ENCODE measurements at regions of chr16 and their contacts with region 1.

Region 1: DNA sequence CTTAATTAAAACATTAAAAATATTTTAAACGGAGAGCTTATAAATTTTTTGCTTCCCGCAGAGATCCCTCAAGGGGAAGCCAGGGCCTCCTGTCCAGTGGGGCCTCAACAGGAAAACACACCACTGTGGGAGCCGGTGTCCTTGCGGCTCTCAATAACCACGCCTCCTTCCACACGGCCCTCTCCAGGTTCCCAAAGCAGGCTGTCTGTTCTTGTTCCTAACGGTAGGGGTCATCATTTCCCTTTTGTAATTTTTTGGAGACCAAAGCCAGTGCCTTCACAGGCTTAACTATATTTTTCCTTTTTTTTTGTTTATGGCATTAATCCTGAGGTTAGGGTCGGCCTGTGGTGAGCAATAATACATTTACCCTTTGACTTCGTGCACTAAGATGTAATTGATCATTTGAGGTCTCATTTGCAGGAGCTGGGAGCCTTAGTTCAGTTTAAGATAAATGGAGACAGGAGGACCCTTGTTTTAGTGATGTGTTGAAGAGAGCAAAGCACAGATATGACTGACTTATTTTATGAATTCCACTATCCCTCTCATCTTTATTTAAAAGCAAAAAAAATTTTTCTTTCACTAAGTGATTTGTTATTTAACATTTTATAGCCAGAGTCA is 77.5 kb upstream of the N4BP1 start:
- DNase-seq: peak; percentile 50
- H3K4me3 Mint-ChIP-seq: no peak overlapping the region
- H3K27ac Mint-ChIP-seq: no peak overlapping the region
- H3K4me1 Mint-ChIP-seq: peaks cover 13% of the 10 kb centered on the region
- H3K27me3 Mint-ChIP-seq: peaks cover 16% of the 10 kb centered on the region

Region 2: GRCh38 chr16:48444574-48444973 is 243.0 kb before region 1 on chr16:
- CTCF ChIA-PET with region 1: no interaction called
- DNase-seq: no peak
- H3K4me3 Mint-ChIP-seq: no peak overlapping the region
- H3K27ac Mint-ChIP-seq: no peak overlapping the region
- H3K4me1 Mint-ChIP-seq: no peaks in the 10 kb centered on the region
- H3K27me3 Mint-ChIP-seq: peaks cover 13% of the 10 kb centered on the region

Region 3: DNA sequence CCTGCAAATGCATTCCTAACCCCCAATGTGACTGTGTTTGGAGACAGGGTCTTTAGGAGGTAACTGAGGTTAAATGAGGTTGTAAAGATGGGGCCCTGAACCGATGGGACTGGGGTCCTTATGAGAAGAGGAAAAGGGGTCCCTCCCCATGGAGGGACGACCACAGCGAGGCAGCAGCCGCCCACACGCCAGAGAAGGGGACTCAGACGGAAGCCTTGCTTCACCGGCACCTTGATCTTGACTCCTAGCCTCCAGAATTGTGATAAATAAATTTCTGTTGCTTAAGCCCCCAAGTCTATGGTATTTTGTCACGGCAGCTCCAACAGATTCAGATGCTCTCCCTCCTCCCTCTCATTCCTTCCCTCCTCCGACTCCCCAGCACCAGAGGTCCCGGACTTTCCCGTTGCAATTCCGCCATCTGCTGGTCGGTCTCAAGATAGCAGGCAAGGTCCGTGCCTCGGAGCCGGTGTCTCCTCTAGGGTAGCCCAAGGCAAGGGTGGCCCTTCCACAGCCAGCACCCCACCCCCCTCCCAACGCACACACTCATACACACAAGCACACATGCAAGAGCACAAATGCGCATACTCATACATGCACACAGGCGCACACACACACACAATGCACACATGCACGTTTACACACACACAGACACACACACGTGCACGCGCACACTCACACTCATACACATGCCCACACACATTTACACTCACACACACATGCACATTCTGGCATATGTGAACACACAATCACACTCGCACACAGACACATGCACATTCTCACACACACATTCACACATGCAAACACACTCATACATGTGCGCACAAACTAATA is 663.0 kb after region 1 on chr16:
- CTCF ChIA-PET with region 1: interaction called, 12 read pairs
- DNase-seq: peak; percentile 64
- H3K4me3 Mint-ChIP-seq: no peak overlapping the region
- H3K27ac Mint-ChIP-seq: no peak overlapping the region
- H3K4me1 Mint-ChIP-seq: no peaks in the 10 kb centered on the region
- H3K27me3 Mint-ChIP-seq: peaks cover 4% of the 10 kb centered on the region